ENCODE measurements at regions of chr10 and their contacts with region 1.

Region 1: GRCh38 chr10:70602665-70603448 is at the start of gene PRF1:
- DNase-seq: peak; percentile 87
- H3K4me3 Mint-ChIP-seq: peak within 1 kb of the TSS; percentile 79
- H3K27ac Mint-ChIP-seq: peak within 1 kb of the TSS; percentile 82
- H3K4me1 Mint-ChIP-seq: peaks cover 25% of the 10 kb centered on the region
- H3K27me3 Mint-ChIP-seq: no peaks in the 10 kb centered on the region
- total RNA-seq, gene PRF1: 32.4 to 32.6 TPM

Region 2: GRCh38 chr10:70558871-70559810 is 43.7 kb before region 1 on chr10:
- CTCF ChIA-PET with region 1: interaction called, 9 read pairs
- POLR2A ChIA-PET with region 1: no interaction called
- intact Hi-C with region 1: loop called (anchors 5 kb)
- DNase-seq: peak; percentile 83
- H3K4me3 Mint-ChIP-seq: peak overlapping the region; percentile 64
- H3K27ac Mint-ChIP-seq: peak overlapping the region; percentile 5
- H3K4me1 Mint-ChIP-seq: peaks cover 11% of the 10 kb centered on the region
- H3K27me3 Mint-ChIP-seq: no peaks in the 10 kb centered on the region

Region 3: GRCh38 chr10:70626056-70626455 is 23.2 kb after region 1 on chr10:
- CTCF ChIA-PET with region 1: no interaction called
- POLR2A ChIA-PET with region 1: no interaction called
- intact Hi-C with region 1: no loop called
- DNase-seq: no peak
- H3K4me3 Mint-ChIP-seq: no peak overlapping the region
- H3K27ac Mint-ChIP-seq: no peak overlapping the region
- H3K4me1 Mint-ChIP-seq: no peaks in the 10 kb centered on the region
- H3K27me3 Mint-ChIP-seq: peaks cover 5% of the 10 kb centered on the region